ENCODE measurements at regions of chr5 and their contacts with region 1.

Region 1: DNA sequence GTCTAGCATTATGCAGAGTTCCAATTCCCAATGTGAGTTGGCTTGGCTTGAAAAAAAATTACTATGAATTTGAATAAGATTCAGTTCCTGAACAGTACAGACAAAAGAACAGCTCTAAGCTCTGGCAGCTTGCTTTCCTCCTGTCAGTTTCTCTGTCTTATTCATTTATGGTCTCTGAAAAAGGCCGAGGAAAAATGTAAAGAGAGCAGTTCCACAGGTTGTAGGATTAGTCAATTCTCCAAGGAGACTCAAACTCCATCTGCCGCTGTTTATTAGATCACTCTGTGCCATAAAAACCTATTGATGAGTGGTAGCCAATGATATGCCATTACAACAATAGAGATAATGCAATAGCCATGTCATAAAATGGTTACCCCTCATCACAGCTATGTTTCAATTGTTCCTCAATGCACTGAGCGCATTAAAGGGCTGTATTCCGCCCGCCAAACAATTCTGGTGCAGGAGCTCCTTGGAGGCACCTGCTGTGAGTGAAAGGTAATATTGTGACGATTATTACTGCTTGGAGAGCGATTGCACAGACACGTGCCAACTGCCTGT is 188.2 kb downstream of the ARRDC3 start:
- DNase-seq: no peak
- ATAC-seq: no peak
- H3K4me3 ChIP-seq: no peak overlapping the region
- H3K27ac ChIP-seq: no peak overlapping the region
- H3K4me1 ChIP-seq: peaks cover 4% of the 10 kb centered on the region; the same call in 1 of the 2 replicates
- H3K27me3 ChIP-seq: no peaks in the 10 kb centered on the region
- CTCF ChIP-seq: no peak
- POLR2A ChIP-seq: no peak
- RAD21 ChIP-seq: no peak

Region 2: DNA sequence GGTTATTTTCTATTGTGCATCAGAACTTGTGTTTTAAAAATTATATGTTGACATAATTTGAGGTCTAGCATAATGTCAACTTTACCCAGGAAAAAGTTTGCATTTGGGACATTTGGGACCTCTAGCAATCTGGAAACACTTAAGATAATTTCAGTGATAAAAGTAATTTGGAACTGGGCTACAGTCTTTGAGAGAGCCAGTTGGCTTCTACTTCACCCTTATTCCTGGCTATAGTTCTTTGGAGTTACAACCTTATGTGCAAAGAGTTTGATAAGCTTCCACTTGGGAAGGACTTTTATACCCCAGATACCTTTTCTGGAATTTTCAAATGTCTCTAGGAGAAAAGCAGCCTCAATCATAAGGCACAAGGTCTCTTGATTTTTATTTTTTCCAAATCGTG is 48.9 kb after region 1 on chr5:
- CTCF ChIA-PET with region 1: no interaction called
- POLR2A ChIA-PET with region 1: no interaction called
- dilution Hi-C with region 1: no loop called
- in situ Hi-C with region 1: no loop called
- intact Hi-C with region 1: loop called (anchors 2 kb)
- DNase-seq: no peak
- ATAC-seq: no peak
- H3K4me3 ChIP-seq: no peak overlapping the region
- H3K27ac ChIP-seq: no peak overlapping the region
- H3K4me1 ChIP-seq: no peaks in the 10 kb centered on the region
- H3K27me3 ChIP-seq: no peaks in the 10 kb centered on the region
- CTCF ChIP-seq: no peak
- POLR2A ChIP-seq: no peak
- RAD21 ChIP-seq: no peak

Region 3: GRCh38 chr5:91345461-91345860 is 150.6 kb after region 1 on chr5:
- CTCF ChIA-PET with region 1: no interaction called
- POLR2A ChIA-PET with region 1: no interaction called
- dilution Hi-C with region 1: no loop called
- in situ Hi-C with region 1: no loop called
- intact Hi-C with region 1: no loop called
- DNase-seq: no peak
- ATAC-seq: no peak
- H3K4me3 ChIP-seq: no peak overlapping the region
- H3K27ac ChIP-seq: no peak overlapping the region
- H3K4me1 ChIP-seq: no peaks in the 10 kb centered on the region
- H3K27me3 ChIP-seq: no peaks in the 10 kb centered on the region
- CTCF ChIP-seq: no peak
- POLR2A ChIP-seq: no peak
- RAD21 ChIP-seq: no peak

Region 4: GRCh38 chr5:92364986-92365550 is 1170.2 kb after region 1 on chr5:
- CTCF ChIA-PET with region 1: no interaction called
- POLR2A ChIA-PET with region 1: no interaction called
- dilution Hi-C with region 1: no loop called
- in situ Hi-C with region 1: no loop called
- intact Hi-C with region 1: no loop called
- DNase-seq: peak; percentile 23
- ATAC-seq: no peak
- H3K4me3 ChIP-seq: no peak overlapping the region
- H3K27ac ChIP-seq: no peak overlapping the region
- H3K4me1 ChIP-seq: no peaks in the 10 kb centered on the region
- H3K27me3 ChIP-seq: no peaks in the 10 kb centered on the region
- CTCF ChIP-seq: no peak
- POLR2A ChIP-seq: no peak
- RAD21 ChIP-seq: no peak